T-cell (primary cell): ENCODE measurements at regions of chr13 and their contacts with region 1.

Region 1: GRCh38 chr13:45340422-45340925 is 509 bp downstream of the TPT1 start:
- DNase-seq: peak; percentile 50 to 86 (median 78)
- ATAC-seq: peak; percentile 47 to 54 (median 52)
- H3K4me3 ChIP-seq: peak overlapping the region; percentile 69 to 85
- H3K4me3 Mint-ChIP-seq: peak overlapping the region; percentile 96 to 98 (median 98)
- H3K27ac ChIP-seq: peak overlapping the region; percentile 88
- H3K27ac Mint-ChIP-seq: peak overlapping the region; percentile 96 to 99
- H3K4me1 ChIP-seq: peaks cover 19 to 38% of the 10 kb centered on the region in 2 experiments
- H3K4me1 Mint-ChIP-seq: peaks cover 66 to 69% (median 67%) of the 10 kb centered on the region in 3 donors
- H3K27me3 ChIP-seq: no peaks in the 10 kb centered on the region
- H3K27me3 Mint-ChIP-seq: no peaks in the 10 kb centered on the region

Region 2: DNA sequence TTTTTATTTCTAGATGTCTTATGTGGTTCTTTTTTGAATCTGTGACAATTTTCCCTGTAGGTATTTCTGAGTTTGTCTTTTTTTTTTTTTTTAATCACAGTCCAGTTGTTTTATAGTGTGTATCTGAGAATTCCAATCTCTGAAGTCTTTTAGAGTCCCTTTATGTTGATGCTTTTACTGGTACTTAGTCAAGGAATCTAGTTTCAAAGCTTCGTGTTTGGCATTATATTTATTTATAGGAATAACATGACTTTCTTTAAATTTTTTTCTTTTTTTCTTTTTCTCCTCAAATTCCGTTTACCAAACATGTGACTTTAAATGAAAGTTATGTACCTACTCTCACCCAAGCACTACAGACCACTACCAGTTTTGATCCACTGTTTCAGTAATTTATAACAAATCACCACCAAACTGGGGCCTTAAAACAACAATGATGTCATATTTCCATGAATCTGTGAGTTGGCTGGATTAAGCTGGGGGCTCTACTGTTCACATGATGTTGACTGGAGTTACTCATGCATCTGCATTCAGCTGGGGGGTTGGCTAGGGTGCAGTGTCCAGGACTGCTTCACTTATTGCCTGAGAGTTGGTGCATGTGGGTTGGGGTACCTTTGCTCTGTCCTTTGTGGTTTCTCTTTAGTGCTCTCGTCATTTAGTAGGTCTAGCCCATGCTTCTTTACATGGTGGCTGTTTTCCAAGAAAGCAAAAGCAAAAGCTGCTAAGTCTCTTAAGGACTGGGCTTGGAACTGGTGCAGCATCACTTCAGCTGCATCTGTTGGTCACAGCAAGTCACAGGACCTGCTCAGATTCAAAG is 161.9 kb before region 1 on chr13:
- CTCF ChIA-PET with region 1: no interaction called
- POLR2A ChIA-PET with region 1: no interaction called
- DNase-seq: no peak
- ATAC-seq: no peak
- H3K4me3 ChIP-seq: no peak overlapping the region
- H3K4me3 Mint-ChIP-seq: no peak overlapping the region
- H3K27ac ChIP-seq: no peak overlapping the region
- H3K27ac Mint-ChIP-seq: no peak overlapping the region
- H3K4me1 ChIP-seq: peaks cover 0 to 2% of the 10 kb centered on the region in 2 experiments
- H3K4me1 Mint-ChIP-seq: peaks cover 32 to 36% (median 34%) of the 10 kb centered on the region in 3 donors
- H3K27me3 ChIP-seq: no peaks in the 10 kb centered on the region
- H3K27me3 Mint-ChIP-seq: no peaks in the 10 kb centered on the region

Region 3: GRCh38 chr13:45367358-45367757 is 26.9 kb after region 1 on chr13:
- CTCF ChIA-PET with region 1: interaction called, 3 to 9 read pairs
- POLR2A ChIA-PET with region 1: interaction called in 1 of 2 experiments, 12 read pairs
- DNase-seq: peak; percentile 71 to 93 (median 87)
- ATAC-seq: peak; percentile 99 to 100 (median 100)
- H3K4me3 ChIP-seq: no peak overlapping the region
- H3K4me3 Mint-ChIP-seq: peak overlapping the region; percentile 32 to 61 (median 57)
- H3K27ac ChIP-seq: peak overlapping the region; percentile 73
- H3K27ac Mint-ChIP-seq: peak overlapping the region; percentile 89 to 94
- H3K4me1 ChIP-seq: peaks cover 9 to 39% of the 10 kb centered on the region in 2 experiments
- H3K4me1 Mint-ChIP-seq: peaks cover 50 to 74% (median 71%) of the 10 kb centered on the region in 3 donors
- H3K27me3 ChIP-seq: no peaks in the 10 kb centered on the region
- H3K27me3 Mint-ChIP-seq: no peaks in the 10 kb centered on the region